SK-MEL-5 (cell line): ENCODE measurements at regions of chr4 and their contacts with region 1.

Region 1: GRCh38 chr4:22962295-22962694 is 269.6 kb downstream of the GBA3 start:
- DNase-seq: peak; percentile 74

Region 2: GRCh38 chr4:23224684-23225420 is 262.6 kb after region 1 on chr4:
- in situ Hi-C with region 1: no loop called
- DNase-seq: no peak

Region 3: GRCh38 chr4:23305026-23305425 is 342.7 kb after region 1 on chr4:
- in situ Hi-C with region 1: loop called (anchors 25 kb)
- DNase-seq: no peak